Endothelial cell of umbilical vein (primary cell): ENCODE measurements at regions of chr2 and their contacts with region 1.

Region 1: DNA sequence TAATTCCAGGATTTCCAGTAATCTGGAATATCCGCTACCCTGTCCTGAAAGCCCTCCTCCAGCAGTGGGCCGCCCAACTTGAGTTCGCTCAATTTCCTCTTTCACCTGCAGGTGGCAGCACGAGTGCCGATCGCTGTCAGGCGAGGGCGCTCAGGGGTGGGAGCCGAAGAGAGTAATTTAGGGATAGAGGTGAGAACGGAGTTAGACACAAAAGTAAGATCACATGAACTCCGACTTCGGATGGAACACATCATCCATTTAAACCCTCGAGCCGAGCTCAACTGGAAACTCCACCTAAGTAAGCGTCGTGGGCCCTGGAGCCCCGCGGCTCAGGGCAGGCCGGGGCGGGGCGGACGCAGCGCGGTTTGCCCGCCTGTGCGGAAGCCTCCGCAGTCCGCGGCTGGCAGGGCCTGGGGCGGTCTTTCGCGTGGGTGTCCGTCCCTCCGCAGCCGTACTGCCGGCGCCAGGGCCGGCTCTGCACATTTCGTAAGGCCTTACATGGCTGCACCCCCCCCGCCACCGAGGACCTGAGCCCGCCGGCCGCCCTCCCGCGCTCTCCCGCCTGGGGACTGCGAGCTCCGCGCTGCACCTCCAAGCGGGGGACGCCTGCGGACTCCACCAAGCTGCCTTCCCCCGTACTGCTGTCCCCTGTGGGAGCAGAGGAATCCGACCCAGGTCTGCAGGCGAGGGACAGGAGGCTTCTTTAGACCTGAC is 61.2 kb downstream of the SEMA4F start:
- DNase-seq: peak; percentile 84
- H3K4me3 ChIP-seq: peak overlapping the region; percentile 43 to 62 (median 57)
- H3K27ac ChIP-seq: no peak overlapping the region
- H3K4me1 ChIP-seq: no peaks in the 10 kb centered on the region
- H3K27me3 ChIP-seq: peaks cover 12 to 24% of the 10 kb centered on the region in 2 experiments
- CTCF ChIP-seq: peak; percentile 82 to 83
- POLR2A ChIP-seq: no peak

Region 2: DNA sequence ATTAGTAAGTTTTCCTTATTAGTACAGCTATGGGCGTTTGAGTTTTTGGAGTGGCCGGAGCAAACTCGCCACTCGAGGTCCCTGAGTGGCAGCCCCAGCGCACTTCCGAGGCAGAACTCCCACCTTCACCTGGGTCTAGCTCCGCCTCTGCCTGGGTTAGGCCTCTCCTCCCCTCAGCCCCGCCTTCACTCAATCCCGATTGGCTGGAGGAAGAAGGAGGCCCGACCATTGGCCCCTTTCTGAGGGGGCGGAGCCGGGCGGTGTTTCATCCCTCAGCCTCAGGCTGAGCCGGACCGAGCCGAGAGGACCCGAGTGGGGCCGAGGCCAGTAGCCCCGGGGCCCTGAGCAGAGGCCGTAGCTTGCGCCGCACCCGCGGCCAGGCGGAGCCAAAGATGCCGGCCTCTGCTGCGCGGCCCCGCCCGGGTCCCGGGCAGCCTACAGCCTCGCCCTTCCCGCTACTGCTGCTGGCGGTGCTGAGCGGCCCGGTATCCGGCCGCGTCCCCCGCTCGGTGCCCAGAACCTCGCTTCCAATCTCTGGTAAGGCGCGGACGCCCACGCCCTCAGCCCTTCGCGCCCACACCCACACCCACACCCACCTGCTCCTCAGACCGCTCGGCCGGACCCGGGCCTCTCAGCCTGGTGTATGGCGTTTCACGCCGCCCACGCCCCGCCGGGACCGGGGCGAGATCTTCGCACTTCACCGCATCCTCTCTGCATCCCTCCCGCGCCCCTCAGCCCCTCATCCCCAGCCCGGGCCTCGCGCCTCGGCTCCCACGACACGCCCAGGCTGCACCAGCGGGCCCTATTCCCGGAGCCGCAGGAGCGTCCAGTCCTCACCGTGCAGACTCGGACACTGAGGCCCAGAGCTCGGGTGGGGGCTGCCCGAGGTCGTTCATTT is 61.0 kb before region 1 on chr2 and contains the start of gene SEMA4F:
- CTCF ChIA-PET with region 1: no interaction called
- POLR2A ChIA-PET with region 1: no interaction called
- dilution Hi-C with region 1: no loop called
- intact Hi-C with region 1: loop called (anchors 1 kb)
- DNase-seq: peak; percentile 93
- H3K4me3 ChIP-seq: peak within 1 kb of the TSS; percentile 55 to 69 (median 57)
- H3K27ac ChIP-seq: no peak within 1 kb of the TSS
- H3K4me1 ChIP-seq: peaks cover 8% of the 10 kb centered on the region
- H3K27me3 ChIP-seq: no peaks in the 10 kb centered on the region
- CTCF ChIP-seq: no peak
- POLR2A ChIP-seq: no peak
- total RNA-seq, gene SEMA4F: 5.9 and 6.0 TPM in 2 replicates

Region 3: GRCh38 chr2:74690571-74690970 is 24.7 kb before region 1 on chr2:
- CTCF ChIA-PET with region 1: interaction called, 27 read pairs
- POLR2A ChIA-PET with region 1: no interaction called
- dilution Hi-C with region 1: no loop called
- intact Hi-C with region 1: loop called (anchors 1 kb)
- DNase-seq: peak; percentile 68
- H3K4me3 ChIP-seq: no peak overlapping the region
- H3K27ac ChIP-seq: no peak overlapping the region
- H3K4me1 ChIP-seq: no peaks in the 10 kb centered on the region
- H3K27me3 ChIP-seq: peaks cover 22% of the 10 kb centered on the region in 2 experiments
- CTCF ChIP-seq: peak; percentile 61 to 65
- POLR2A ChIP-seq: no peak

Region 4: GRCh38 chr2:74740389-74741075 is 25.3 kb after region 1 on chr2:
- CTCF ChIA-PET with region 1: interaction called, 13 read pairs
- POLR2A ChIA-PET with region 1: no interaction called
- dilution Hi-C with region 1: no loop called
- intact Hi-C with region 1: no loop called
- DNase-seq: peak; percentile 77
- H3K4me3 ChIP-seq: no peak overlapping the region
- H3K27ac ChIP-seq: no peak overlapping the region
- H3K4me1 ChIP-seq: peaks cover 18% of the 10 kb centered on the region
- H3K27me3 ChIP-seq: no peaks in the 10 kb centered on the region
- CTCF ChIP-seq: no peak
- POLR2A ChIP-seq: no peak

Region 5: GRCh38 chr2:74833418-74834233 is 118.4 kb after region 1 on chr2 and contains the start of gene HK2:
- CTCF ChIA-PET with region 1: interaction called, 47 read pairs
- POLR2A ChIA-PET with region 1: no interaction called
- dilution Hi-C with region 1: no loop called
- intact Hi-C with region 1: loop called (anchors 1 kb)
- DNase-seq: peak; percentile 85
- H3K4me3 ChIP-seq: peak within 1 kb of the TSS; percentile 67 to 88 (median 80)
- H3K27ac ChIP-seq: peak within 1 kb of the TSS; percentile 49
- H3K4me1 ChIP-seq: peaks cover 13% of the 10 kb centered on the region
- H3K27me3 ChIP-seq: no peaks in the 10 kb centered on the region
- CTCF ChIP-seq: no peak
- POLR2A ChIP-seq: no peak
- total RNA-seq, gene HK2: 11.0 and 13.0 TPM in 2 replicates

Region 6: DNA sequence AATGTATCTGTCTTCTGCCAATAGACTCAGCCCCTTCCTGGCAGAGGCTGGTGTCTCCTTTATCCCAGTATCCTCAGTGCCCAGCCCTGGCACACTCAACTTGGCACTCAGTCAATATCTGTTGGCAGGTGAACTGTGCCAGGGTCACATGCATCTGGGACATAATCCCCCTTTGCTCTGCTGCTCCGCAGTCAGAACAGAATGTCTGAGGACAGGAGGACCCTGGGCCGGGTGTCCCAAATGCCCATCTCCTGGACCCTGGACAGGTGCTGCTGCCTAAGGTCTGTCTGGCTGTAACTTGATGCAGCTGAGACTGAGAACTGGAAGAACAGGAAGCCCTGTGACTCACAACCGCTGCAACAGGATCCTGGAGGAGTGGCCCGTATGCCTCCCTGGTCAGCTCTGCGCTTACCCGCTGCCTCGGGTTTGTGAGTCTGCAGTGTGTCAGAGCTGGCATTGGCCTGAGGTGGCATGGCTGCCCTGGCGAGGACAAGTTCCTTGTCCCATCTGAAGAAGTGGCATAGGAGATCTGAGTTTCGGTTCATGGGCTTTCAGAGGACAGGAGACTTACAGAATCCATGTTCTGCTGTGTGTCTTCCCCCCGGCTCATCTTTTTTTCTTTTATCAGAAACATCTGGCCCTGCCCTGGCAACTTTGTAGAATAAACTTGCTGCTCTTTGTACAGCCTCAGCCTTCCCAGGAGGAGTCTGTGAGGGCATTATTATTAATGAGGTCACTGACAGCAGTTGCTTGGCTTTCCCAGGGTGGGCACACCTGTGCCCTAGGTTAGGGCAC is 130.2 kb after region 1 on chr2:
- CTCF ChIA-PET with region 1: interaction called, 4 read pairs
- POLR2A ChIA-PET with region 1: no interaction called
- dilution Hi-C with region 1: no loop called
- intact Hi-C with region 1: loop called (anchors 2 kb)
- DNase-seq: peak; percentile 94
- H3K4me3 ChIP-seq: no peak overlapping the region
- H3K27ac ChIP-seq: peak overlapping the region; percentile 63
- H3K4me1 ChIP-seq: peaks cover 47% of the 10 kb centered on the region
- H3K27me3 ChIP-seq: no peaks in the 10 kb centered on the region
- CTCF ChIP-seq: no peak
- POLR2A ChIP-seq: peak; percentile 73

Region 7: GRCh38 chr2:74876081-74876886 is 161.0 kb after region 1 on chr2:
- CTCF ChIA-PET with region 1: interaction called, 112 read pairs
- POLR2A ChIA-PET with region 1: no interaction called
- dilution Hi-C with region 1: no loop called
- intact Hi-C with region 1: loop called (anchors 1 kb)
- DNase-seq: peak; percentile 63
- H3K4me3 ChIP-seq: no peak overlapping the region
- H3K27ac ChIP-seq: no peak overlapping the region
- H3K4me1 ChIP-seq: no peaks in the 10 kb centered on the region
- H3K27me3 ChIP-seq: no peaks in the 10 kb centered on the region
- CTCF ChIP-seq: peak; percentile 52 to 62
- POLR2A ChIP-seq: no peak